ENCODE measurements at regions of chr3 and their contacts with region 1.

Region 1: GRCh38 chr3:88090681-88091080 is 31.6 kb downstream of the ZNF654 start:
- DNase-seq: no peak
- ATAC-seq: no peak
- H3K4me3 ChIP-seq: no peak overlapping the region
- H3K27ac ChIP-seq: no peak overlapping the region
- H3K4me1 ChIP-seq: no peaks in the 10 kb centered on the region
- H3K27me3 ChIP-seq: no peaks in the 10 kb centered on the region
- CTCF ChIP-seq: no peak
- EP300 ChIP-seq: no peak
- POLR2A ChIP-seq: no peak
- RAD21 ChIP-seq: no peak

Region 2: DNA sequence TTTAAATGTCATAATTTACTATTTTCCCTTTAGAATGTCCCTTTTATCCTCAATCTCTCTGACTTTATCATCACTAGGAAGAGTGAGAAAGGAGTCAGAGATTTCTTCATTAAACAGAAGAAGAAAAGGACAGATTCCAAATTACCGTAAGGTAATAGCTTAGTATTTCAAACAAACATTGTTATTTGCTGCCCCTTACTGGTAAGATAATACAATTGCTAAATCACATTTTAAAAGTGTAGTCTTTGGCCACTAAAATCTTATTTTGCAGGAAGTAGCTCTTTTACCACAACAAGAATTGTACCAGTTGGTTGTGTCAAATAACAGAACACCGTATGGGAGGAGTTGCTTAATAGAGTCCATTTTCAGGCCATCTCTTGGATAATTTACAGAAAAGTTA is 85.6 kb before region 1 on chr3:
- CTCF ChIA-PET with region 1: no interaction called
- POLR2A ChIA-PET with region 1: no interaction called
- RAD21 ChIA-PET with region 1: no interaction called
- SMC1A ChIA-PET with region 1: no interaction called
- in situ Hi-C with region 1: no loop called
- intact Hi-C with region 1: no loop called
- DNase-seq: no peak
- ATAC-seq: peak; percentile 76
- H3K4me3 ChIP-seq: no peak overlapping the region
- H3K27ac ChIP-seq: no peak overlapping the region
- H3K4me1 ChIP-seq: no peaks in the 10 kb centered on the region
- H3K27me3 ChIP-seq: no peaks in the 10 kb centered on the region
- CTCF ChIP-seq: peak; percentile 16 to 55 (median 21); a peak in 3 of 6 replicates
- EP300 ChIP-seq: no peak
- POLR2A ChIP-seq: no peak
- RAD21 ChIP-seq: peak; percentile 51

Region 3: DNA sequence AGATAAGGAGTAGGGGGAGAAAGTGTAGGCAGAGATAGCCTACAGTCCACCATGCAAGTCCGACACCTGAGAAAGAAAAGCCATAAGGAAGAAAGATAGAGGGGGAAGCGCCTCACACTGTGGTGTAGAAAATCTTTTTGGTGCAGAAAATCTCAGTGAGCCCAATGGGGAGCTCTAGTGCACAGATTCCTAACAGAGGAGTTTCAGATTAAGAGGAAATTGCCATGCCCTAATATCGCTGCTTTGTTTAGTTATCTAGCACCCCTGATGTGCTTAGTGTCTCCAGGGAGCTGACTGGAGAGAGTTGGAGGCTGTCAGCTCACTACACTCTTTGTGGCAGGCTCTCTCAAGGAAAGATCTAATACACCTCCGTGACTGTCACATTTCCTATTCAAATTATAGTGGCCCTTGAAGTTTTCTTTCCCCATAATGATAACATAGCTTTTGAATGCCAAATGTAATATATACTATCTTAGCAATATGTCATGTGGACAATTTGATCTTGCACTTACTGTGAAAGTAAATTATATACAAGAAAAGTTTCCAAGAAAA is 65.6 kb before region 1 on chr3:
- CTCF ChIA-PET with region 1: no interaction called
- POLR2A ChIA-PET with region 1: no interaction called
- RAD21 ChIA-PET with region 1: no interaction called
- SMC1A ChIA-PET with region 1: no interaction called
- in situ Hi-C with region 1: no loop called
- intact Hi-C with region 1: no loop called
- DNase-seq: no peak
- ATAC-seq: 0 out of 3 replicates have a peak, but pooled peaks have one; percentile 19
- H3K4me3 ChIP-seq: no peak overlapping the region
- H3K27ac ChIP-seq: no peak overlapping the region
- H3K4me1 ChIP-seq: no peaks in the 10 kb centered on the region
- H3K27me3 ChIP-seq: no peaks in the 10 kb centered on the region; a peak in 1 of 4 replicates
- CTCF ChIP-seq: no peak
- EP300 ChIP-seq: no peak
- POLR2A ChIP-seq: no peak
- RAD21 ChIP-seq: no peak

Region 4: GRCh38 chr3:88101142-88101541 is 10.5 kb after region 1 on chr3:
- CTCF ChIA-PET with region 1: interaction called, 3 read pairs
- POLR2A ChIA-PET with region 1: no interaction called
- RAD21 ChIA-PET with region 1: no interaction called
- SMC1A ChIA-PET with region 1: interaction called, 10 read pairs
- in situ Hi-C with region 1: no loop called
- intact Hi-C with region 1: no loop called
- DNase-seq: no peak
- ATAC-seq: peak; percentile 74
- H3K4me3 ChIP-seq: no peak overlapping the region
- H3K27ac ChIP-seq: no peak overlapping the region
- H3K4me1 ChIP-seq: no peaks in the 10 kb centered on the region
- H3K27me3 ChIP-seq: no peaks in the 10 kb centered on the region
- CTCF ChIP-seq: no peak
- EP300 ChIP-seq: no peak
- POLR2A ChIP-seq: no peak
- RAD21 ChIP-seq: no peak

Measured in GM12878 (cell line).